ENCODE measurements at regions of chrX and their contacts with region 1.

Region 1: GRCh38 chrX:135484641-135485289 is 35.7 kb upstream of the INTS6L start:
- DNase-seq: peak; percentile 21 to 44 (median 42)
- H3K4me3 ChIP-seq: no peak overlapping the region
- H3K4me3 Mint-ChIP-seq: no peak overlapping the region
- H3K27ac ChIP-seq: no peak overlapping the region
- H3K27ac Mint-ChIP-seq: no peak overlapping the region
- H3K4me1 ChIP-seq: peaks cover 0 to 8% of the 10 kb centered on the region in 2 donors
- H3K4me1 Mint-ChIP-seq: peaks cover 4% of the 10 kb centered on the region
- H3K27me3 ChIP-seq: peaks cover 0 to 2% of the 10 kb centered on the region in 2 donors
- H3K27me3 Mint-ChIP-seq: peaks cover 0 to 7% (median 0%) of the 10 kb centered on the region in 3 donors
- CTCF ChIP-seq: peak; percentile 51

Region 2: GRCh38 chrX:135521405-135522189 is 36.8 kb after region 1 on chrX:
- intact Hi-C with region 1: loop called in 1 of 2 experiments (anchors 2 kb)
- DNase-seq: peak; percentile 72 to 87 (median 85)
- H3K4me3 ChIP-seq: peak overlapping the region; percentile 85 to 86 (median 85)
- H3K4me3 Mint-ChIP-seq: peak overlapping the region; percentile 90 to 94
- H3K27ac ChIP-seq: peak overlapping the region; percentile 82 to 95
- H3K27ac Mint-ChIP-seq: peak overlapping the region; percentile 92 to 97 (median 95)
- H3K4me1 ChIP-seq: peaks cover 6 to 14% of the 10 kb centered on the region in 2 donors
- H3K4me1 Mint-ChIP-seq: peaks cover 17% of the 10 kb centered on the region
- H3K27me3 ChIP-seq: no peaks in the 10 kb centered on the region
- H3K27me3 Mint-ChIP-seq: peaks cover 0 to 11% (median 0%) of the 10 kb centered on the region in 3 donors
- CTCF ChIP-seq: no peak

Region 3: GRCh38 chrX:135572436-135572835 is 87.7 kb after region 1 on chrX:
- intact Hi-C with region 1: loop called (anchors 10 kb)
- DNase-seq: no peak
- H3K4me3 ChIP-seq: no peak overlapping the region
- H3K4me3 Mint-ChIP-seq: no peak overlapping the region
- H3K27ac ChIP-seq: no peak overlapping the region
- H3K27ac Mint-ChIP-seq: no peak overlapping the region
- H3K4me1 ChIP-seq: no peaks in the 10 kb centered on the region
- H3K4me1 Mint-ChIP-seq: no peaks in the 10 kb centered on the region
- H3K27me3 ChIP-seq: no peaks in the 10 kb centered on the region
- H3K27me3 Mint-ChIP-seq: peaks cover 0 to 4% (median 0%) of the 10 kb centered on the region in 3 donors
- CTCF ChIP-seq: peak; percentile 52